ENCODE measurements at regions of chr6 and their contacts with region 1.

Region 1: DNA sequence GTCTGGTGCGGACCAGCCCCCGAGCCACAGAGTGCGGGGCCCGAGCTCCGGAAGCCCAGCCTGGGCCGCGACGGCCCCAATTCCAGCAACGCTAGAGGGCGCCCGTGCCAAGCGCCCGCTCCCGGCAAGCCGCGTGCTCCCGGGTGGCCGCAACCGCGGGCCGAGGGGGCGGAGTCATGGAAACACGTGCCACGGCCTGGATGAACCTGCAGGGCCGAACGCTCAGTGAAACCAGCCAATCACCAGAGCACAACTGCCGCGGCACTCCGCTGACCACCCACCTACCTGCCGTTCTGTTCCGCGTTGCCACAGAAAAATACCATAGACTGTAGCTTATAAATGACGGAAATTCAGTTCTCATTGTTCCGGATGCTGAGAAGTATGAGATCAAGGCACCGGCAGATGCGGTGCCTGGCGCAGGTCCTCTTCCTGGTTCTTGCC is 85.7 kb upstream of the FOXC1 start:
- DNase-seq: peak; percentile 86
- H3K4me3 Mint-ChIP-seq: peak overlapping the region; percentile 40
- H3K27ac Mint-ChIP-seq: peak overlapping the region; percentile 84
- H3K4me1 Mint-ChIP-seq: peaks cover 55% of the 10 kb centered on the region
- H3K27me3 Mint-ChIP-seq: peaks cover 28% of the 10 kb centered on the region

Region 2: DNA sequence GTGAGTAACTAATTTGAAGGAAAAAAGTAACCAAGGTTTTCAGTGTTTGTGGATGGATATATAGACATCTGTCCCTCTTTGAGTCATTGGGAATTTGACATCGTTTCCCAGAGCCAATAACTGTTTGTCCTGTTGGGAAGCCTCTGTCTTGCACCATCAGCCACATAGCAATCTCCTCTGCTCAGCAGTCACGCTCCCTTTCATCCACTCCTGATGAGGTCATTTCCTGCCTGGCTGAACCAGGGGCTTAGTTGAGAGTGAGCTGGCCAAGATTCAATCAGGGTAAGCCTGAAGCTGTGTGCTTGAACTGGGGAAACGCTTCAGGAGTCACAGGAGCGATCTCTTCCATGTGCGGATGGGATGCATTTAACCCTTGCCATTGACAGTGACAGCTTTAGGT is 333.7 kb before region 1 on chr6:
- CTCF ChIA-PET with region 1: no interaction called
- DNase-seq: no peak
- H3K4me3 Mint-ChIP-seq: no peak overlapping the region
- H3K27ac Mint-ChIP-seq: no peak overlapping the region
- H3K4me1 Mint-ChIP-seq: no peaks in the 10 kb centered on the region
- H3K27me3 Mint-ChIP-seq: peaks cover 7% of the 10 kb centered on the region

Region 3: DNA sequence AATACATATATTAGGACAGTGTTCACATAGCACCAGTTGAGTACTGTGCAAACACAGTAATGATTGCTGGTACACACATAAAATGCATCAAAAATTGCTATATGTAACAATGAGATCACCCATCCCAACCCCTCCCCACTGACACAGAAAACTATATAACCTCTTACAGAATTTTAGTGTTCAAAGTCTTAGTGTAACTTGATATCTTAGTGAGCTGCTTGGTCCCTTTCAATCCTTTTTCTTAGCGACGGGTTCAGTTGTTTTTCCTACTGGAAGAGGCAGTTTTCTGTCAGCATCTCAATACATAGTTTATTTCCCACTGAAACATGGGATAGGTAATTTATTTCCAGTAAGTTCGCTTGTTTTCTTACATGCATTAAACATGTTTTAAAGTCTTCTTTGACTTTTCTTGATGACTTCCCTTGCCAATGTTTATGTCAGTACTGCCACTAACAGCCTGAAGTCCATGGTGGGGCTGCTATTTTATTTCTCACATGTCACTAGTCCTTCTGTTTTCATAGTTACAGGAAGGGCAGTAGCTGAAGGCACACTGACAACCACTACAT is 10.8 kb before region 1 on chr6:
- CTCF ChIA-PET with region 1: interaction called, 12 read pairs
- DNase-seq: no peak
- H3K4me3 Mint-ChIP-seq: no peak overlapping the region
- H3K27ac Mint-ChIP-seq: no peak overlapping the region
- H3K4me1 Mint-ChIP-seq: peaks cover 4% of the 10 kb centered on the region
- H3K27me3 Mint-ChIP-seq: peaks cover 25% of the 10 kb centered on the region

Region 4: GRCh38 chr6:1535295-1535694 is 11.2 kb after region 1 on chr6:
- CTCF ChIA-PET with region 1: interaction called, 21 read pairs
- DNase-seq: peak; percentile 64
- H3K4me3 Mint-ChIP-seq: peak overlapping the region; percentile 27
- H3K27ac Mint-ChIP-seq: peak overlapping the region; percentile 75
- H3K4me1 Mint-ChIP-seq: peaks cover 27% of the 10 kb centered on the region
- H3K27me3 Mint-ChIP-seq: no peaks in the 10 kb centered on the region

Region 5: GRCh38 chr6:1554476-1555310 is 30.6 kb after region 1 on chr6:
- CTCF ChIA-PET with region 1: interaction called, 60 read pairs
- DNase-seq: peak; percentile 70
- H3K4me3 Mint-ChIP-seq: peak overlapping the region; percentile 80
- H3K27ac Mint-ChIP-seq: peak overlapping the region; percentile 90
- H3K4me1 Mint-ChIP-seq: peaks cover 37% of the 10 kb centered on the region
- H3K27me3 Mint-ChIP-seq: peaks cover 35% of the 10 kb centered on the region

Region 6: GRCh38 chr6:1562171-1562955 is 38.3 kb after region 1 on chr6:
- CTCF ChIA-PET with region 1: interaction called, 54 read pairs
- DNase-seq: no peak
- H3K4me3 Mint-ChIP-seq: no peak overlapping the region
- H3K27ac Mint-ChIP-seq: no peak overlapping the region
- H3K4me1 Mint-ChIP-seq: no peaks in the 10 kb centered on the region
- H3K27me3 Mint-ChIP-seq: peaks cover 37% of the 10 kb centered on the region

Region 7: GRCh38 chr6:1596088-1596852 is 72.2 kb after region 1 on chr6:
- CTCF ChIA-PET with region 1: interaction called, 38 read pairs
- DNase-seq: peak; percentile 74
- H3K4me3 Mint-ChIP-seq: no peak overlapping the region
- H3K27ac Mint-ChIP-seq: no peak overlapping the region
- H3K4me1 Mint-ChIP-seq: peaks cover 6% of the 10 kb centered on the region
- H3K27me3 Mint-ChIP-seq: peaks cover 92% of the 10 kb centered on the region

Measured in activated naive CD4-positive, alpha-beta T cell treated with anti-CD3 and anti-CD28 coated beads, Interleukin-2, amount 10 ng/mL, durations not matched to agents 7 days and 5 days (primary cell).